Cardiac septum (tissue), 1 donor: ENCODE measurements at regions of chr2 and their contacts with region 1.

Region 1: GRCh38 chr2:235106874-235107639 is 155.2 kb downstream of the SH3BP4 start:
- DNase-seq: no peak

Region 2: DNA sequence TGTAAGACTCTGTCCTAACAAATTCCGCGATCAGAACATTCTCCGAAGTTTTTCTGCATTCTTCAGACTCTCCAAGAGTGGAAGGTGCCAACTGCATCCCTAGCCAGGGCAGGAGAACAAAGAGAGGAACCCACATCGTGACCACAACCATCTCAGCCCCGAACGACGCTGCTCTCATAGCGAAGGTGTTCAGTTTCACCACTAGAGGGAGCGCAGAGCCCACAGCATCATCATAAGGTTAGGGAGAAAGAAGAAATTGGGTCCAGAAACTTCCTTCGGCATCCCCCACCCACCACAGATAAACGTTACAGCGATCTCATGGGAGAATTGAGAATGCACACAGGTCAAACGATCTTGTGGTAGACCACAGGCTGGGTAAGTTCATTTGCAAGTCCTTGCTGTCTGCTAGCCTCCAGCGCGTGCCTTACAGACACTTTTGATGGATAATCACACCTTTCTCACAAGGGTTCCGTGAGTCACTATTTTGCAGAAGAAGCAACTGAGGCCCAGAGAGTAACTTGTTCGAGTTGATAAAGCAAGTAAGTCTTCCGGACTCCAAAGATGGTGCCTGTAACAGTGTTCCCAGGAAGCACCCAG is 556.4 kb before region 1 on chr2:
- intact Hi-C with region 1: loop called (anchors 2 kb)
- DNase-seq: no peak

Region 3: GRCh38 chr2:234881413-234882241 is 225.4 kb before region 1 on chr2:
- intact Hi-C with region 1: loop called (anchors 5 kb)
- DNase-seq: peak; percentile 85

Region 4: DNA sequence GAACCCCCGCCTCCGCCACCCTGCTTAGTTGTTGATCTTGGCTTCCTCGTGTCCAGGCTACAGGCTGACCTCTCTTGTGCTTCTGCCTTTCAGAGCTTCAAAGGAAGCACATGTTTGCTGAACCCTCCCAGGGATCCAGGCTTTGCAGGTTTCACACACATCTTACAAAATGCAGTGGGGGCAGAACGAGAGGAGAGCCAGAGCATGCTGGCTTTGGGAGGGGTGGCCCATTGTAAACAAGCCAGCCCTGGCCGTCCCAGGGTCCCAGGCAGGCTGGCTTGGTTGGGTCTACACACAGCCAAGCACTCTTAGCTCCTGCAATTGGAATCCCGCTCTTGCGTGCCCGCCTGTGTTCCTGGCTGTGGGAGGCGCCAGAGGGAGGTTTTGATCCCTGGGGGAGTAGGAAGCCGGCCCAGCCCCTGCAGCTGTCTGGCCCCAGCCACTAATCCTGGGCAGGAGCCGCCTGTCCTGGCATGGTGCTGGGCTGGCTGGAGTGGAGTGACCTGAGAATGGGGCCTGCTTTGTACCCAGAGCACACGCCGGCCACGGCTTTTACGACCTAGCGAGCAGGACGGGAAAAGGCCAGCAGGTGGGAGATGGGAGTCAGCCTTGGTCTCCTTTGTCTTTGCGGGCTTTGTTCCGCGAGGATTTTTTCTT is 101.3 kb before region 1 on chr2:
- intact Hi-C with region 1: loop called (anchors 5 kb)
- DNase-seq: no peak

Region 5: DNA sequence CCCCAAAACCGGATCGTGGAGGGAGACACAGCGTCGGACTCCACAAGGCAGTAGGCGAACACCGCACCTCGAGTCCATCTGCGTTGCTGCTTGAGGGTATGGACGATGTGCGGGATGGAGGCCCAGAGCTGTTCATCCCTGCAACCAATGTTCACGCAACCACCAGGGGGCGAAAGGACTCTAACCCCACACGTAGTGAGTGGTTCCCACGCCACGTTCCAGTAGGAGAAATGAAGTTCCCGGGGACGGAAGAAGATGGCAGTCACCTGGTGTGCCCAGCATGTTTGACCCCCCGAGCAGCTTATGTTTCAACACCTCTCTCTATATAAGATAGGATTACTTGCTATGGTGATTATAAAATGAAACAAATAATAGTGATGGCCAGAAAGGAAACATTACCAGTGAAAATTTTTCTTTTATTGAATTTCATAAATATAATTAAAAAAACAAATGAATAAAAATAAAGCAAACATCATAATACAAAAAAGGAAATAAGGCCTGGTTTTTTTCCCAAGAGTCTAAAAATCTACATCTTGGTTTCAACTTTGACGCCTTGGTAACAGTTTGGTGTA is 29.0 kb after region 1 on chr2:
- intact Hi-C with region 1: no loop called
- DNase-seq: peak; percentile 87